ENCODE measurements at regions of chr1 and their contacts with region 1.

Region 1: DNA sequence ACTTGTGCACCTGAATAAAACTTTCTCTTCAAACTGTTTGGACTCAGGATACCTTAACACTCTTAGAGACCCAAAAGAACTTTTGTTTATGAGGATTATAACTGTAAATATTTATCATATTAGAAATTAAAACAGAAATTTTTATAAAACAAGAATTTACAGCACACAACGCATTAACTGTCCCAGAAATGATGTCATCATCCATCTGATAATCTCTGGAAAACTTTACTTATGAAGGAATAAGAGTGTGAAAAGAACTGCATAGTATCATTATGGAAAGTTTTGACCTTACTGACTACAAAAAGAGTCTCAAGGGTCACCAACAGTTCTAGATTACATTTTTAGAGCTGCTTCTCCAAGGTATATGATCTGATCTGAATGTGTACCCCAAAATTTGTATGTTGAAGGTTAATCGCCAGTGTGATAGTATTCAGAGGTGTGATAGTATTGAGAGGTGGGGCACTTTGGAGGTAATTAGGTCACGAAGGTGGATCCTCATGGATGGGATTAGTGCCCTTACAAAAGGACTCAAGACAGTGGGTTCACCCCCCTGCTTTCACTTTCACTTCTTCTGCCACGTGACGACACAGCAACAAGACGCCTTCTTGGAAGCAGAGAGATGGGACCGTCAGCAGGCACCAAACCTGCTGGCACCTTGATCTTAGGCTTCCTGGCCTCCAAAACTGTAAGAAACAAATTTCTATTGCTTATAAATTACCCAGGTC is 95.7 kb upstream of the NR5A2 start:
- ATAC-seq: peak in 1 of 8 experiments; percentile 84
- H3K4me3 ChIP-seq: no peak overlapping the region
- H3K27ac ChIP-seq: no peak overlapping the region
- H3K4me1 ChIP-seq: no peaks in the 10 kb centered on the region

Region 2: GRCh38 chr1:200029035-200029821 is 97.4 kb after region 1 on chr1:
- in situ Hi-C with region 1: loop called in 1 of 9 experiments (anchors 25 kb)
- ATAC-seq: peak; percentile 72 to 97 (median 92)
- H3K4me3 ChIP-seq: peak overlapping the region; percentile 38 to 53 (median 41)
- H3K27ac ChIP-seq: no peak overlapping the region
- H3K4me1 ChIP-seq: peaks cover 0 to 6% of the 10 kb centered on the region in 2 donors

Region 3: GRCh38 chr1:200253774-200254495 is 322.1 kb after region 1 on chr1:
- in situ Hi-C with region 1: no loop called
- ATAC-seq: no peak
- H3K4me3 ChIP-seq: no peak overlapping the region
- H3K27ac ChIP-seq: no peak overlapping the region
- H3K4me1 ChIP-seq: peaks cover 2 to 16% of the 10 kb centered on the region in 2 donors